CD14-positive monocyte (primary cell): ENCODE measurements at regions of chr1 and their contacts with region 1.

Region 1: DNA sequence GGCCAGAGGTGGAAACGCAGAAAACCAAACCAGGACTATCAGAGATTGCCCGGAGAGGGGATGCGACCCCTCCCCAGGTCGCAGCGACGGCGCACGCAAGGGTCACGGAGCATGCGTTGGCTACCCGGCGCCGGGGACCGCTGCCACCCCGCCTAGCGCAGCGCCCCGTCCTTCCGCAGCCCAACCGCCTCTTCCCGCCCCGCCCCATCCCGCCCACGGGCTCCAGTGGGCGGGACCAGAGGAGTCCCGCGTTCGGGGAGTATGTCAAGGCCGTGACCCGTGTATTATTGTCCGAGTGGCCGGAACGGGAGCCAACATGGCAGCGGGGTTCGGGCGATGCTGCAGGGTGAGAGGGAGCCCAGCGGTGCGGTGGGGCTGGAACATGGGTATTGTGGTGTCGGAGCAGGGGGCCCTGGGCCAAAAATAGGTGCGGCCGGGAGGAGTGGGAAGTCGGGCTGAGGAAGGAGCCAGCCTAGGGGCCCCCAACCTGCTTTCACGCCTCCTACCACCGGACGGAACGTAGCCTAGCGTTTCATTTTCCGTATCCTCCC is at the start of gene ACADM:
- DNase-seq: peak; percentile 79 to 85 (median 81)
- H3K4me3 ChIP-seq: peak within 1 kb of the TSS; percentile 82 to 84 (median 83)
- H3K4me3 Mint-ChIP-seq: peak within 1 kb of the TSS; percentile 99 to 100
- H3K27ac ChIP-seq: peak within 1 kb of the TSS; percentile 71 to 79
- H3K27ac Mint-ChIP-seq: peak within 1 kb of the TSS; percentile 92 to 99 (median 96)
- H3K4me1 ChIP-seq: peaks cover 13 to 27% of the 10 kb centered on the region in 2 donors
- H3K4me1 Mint-ChIP-seq: peaks cover 31% of the 10 kb centered on the region
- H3K27me3 ChIP-seq: no peaks in the 10 kb centered on the region
- H3K27me3 Mint-ChIP-seq: peaks cover 0 to 2% (median 0%) of the 10 kb centered on the region in 3 donors
- CTCF ChIP-seq: no peak
- polyA plus RNA-seq, gene ACADM: 7.1 to 32.1 (median 31.3) TPM

Region 2: DNA sequence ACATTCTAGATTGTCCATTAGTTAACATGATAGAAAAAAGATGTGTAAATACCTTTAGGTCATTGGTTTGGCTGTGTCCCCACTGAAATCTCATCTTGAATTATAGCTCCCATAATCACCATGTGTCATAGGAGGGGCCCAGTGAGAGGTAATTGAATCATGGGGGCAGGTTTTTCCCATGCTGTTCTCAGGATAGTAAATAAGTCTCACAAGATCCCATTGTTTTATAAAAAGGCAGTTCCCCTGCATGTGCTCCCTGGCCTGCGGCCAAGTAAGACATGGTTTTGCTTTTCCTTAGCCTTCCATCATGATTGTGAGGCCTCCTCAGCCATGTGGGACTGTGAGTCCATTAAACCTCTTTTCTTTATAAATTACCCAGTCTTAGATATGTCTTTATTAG is 81.1 kb before region 1 on chr1:
- intact Hi-C with region 1: no loop called
- DNase-seq: no peak
- H3K4me3 ChIP-seq: no peak overlapping the region
- H3K4me3 Mint-ChIP-seq: peak overlapping the region in 1 of 2 donors; percentile 9
- H3K27ac ChIP-seq: no peak overlapping the region
- H3K27ac Mint-ChIP-seq: no peak overlapping the region
- H3K4me1 ChIP-seq: no peaks in the 10 kb centered on the region
- H3K4me1 Mint-ChIP-seq: no peaks in the 10 kb centered on the region
- H3K27me3 ChIP-seq: no peaks in the 10 kb centered on the region
- H3K27me3 Mint-ChIP-seq: peaks cover 0 to 2% (median 1%) of the 10 kb centered on the region in 3 donors
- CTCF ChIP-seq: no peak

Region 3: GRCh38 chr1:75785983-75786853 is 61.7 kb after region 1 on chr1 and contains the start of gene RABGGTB:
- intact Hi-C with region 1: loop called (anchors 5 kb)
- DNase-seq: peak; percentile 92 to 98 (median 94)
- H3K4me3 ChIP-seq: peak within 1 kb of the TSS; percentile 63 to 89 (median 78)
- H3K4me3 Mint-ChIP-seq: peak within 1 kb of the TSS; percentile 98 to 99
- H3K27ac ChIP-seq: peak within 1 kb of the TSS; percentile 89
- H3K27ac Mint-ChIP-seq: peak within 1 kb of the TSS; percentile 93 to 99 (median 99)
- H3K4me1 ChIP-seq: peaks cover 44 to 61% of the 10 kb centered on the region in 2 donors
- H3K4me1 Mint-ChIP-seq: peaks cover 60% of the 10 kb centered on the region
- H3K27me3 ChIP-seq: no peaks in the 10 kb centered on the region
- H3K27me3 Mint-ChIP-seq: peaks cover 0 to 3% (median 0%) of the 10 kb centered on the region in 3 donors
- CTCF ChIP-seq: no peak
- polyA plus RNA-seq, gene RABGGTB: 6.5 to 84.2 (median 8.1) TPM